CD14-positive monocyte (primary cell): ENCODE measurements at regions of chr18 and their contacts with region 1.

Region 1: GRCh38 chr18:77067291-77068061 is 65.1 kb downstream of the MBP start:
- DNase-seq: peak; percentile 89 to 93 (median 92)
- H3K4me3 ChIP-seq: no peak overlapping the region
- H3K4me3 Mint-ChIP-seq: peak overlapping the region; percentile 59 to 62
- H3K27ac ChIP-seq: peak overlapping the region; percentile 98 to 100
- H3K27ac Mint-ChIP-seq: peak overlapping the region; percentile 100
- H3K4me1 ChIP-seq: peaks cover 72% of the 10 kb centered on the region in 2 donors
- H3K4me1 Mint-ChIP-seq: peaks cover 89% of the 10 kb centered on the region
- H3K27me3 ChIP-seq: no peaks in the 10 kb centered on the region
- H3K27me3 Mint-ChIP-seq: no peaks in the 10 kb centered on the region
- CTCF ChIP-seq: no peak

Region 2: DNA sequence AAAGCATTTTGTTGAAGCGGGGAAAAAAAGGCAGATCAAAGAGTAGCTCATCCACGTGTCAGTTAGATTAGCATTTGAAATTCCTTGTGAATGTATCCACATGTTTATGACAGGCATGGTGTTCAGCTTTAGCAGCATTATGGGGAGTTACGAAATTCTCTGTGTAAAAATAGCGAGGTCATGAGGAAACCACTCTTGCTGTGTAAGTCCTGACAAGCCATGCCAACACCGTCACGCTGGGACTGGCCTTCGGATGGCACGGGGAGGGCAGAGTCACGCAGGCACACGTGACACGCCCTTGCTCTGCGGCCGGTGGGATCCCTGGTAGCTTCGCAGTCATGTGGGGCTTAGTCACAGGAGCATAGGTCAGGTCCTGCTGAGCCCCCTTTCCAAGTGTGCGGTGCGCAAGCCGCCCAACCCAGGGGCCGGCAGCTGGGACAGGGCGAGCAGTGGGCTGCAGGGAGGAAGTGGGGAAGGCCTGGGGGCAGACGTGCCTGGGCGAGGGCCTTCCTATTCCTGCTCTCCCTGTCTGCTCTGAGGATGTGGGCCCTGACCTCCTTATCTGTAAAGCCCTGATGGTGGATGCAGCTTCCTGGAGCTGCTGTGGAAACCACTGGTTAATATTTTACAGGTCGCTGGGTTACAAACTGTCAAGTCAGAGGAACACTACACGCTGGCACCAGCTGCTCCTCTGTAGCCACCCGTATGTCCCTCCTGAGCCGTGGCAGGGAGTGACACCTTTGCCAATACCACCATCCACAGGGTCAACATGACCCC is 47.1 kb after region 1 on chr18:
- intact Hi-C with region 1: loop called (anchors 1 to 5 kb)
- DNase-seq: peak; percentile 100
- H3K4me3 ChIP-seq: peak overlapping the region in 1 of 3 experiments; percentile 29
- H3K4me3 Mint-ChIP-seq: peak overlapping the region; percentile 72 to 76
- H3K27ac ChIP-seq: peak overlapping the region; percentile 97 to 99
- H3K27ac Mint-ChIP-seq: peak overlapping the region; percentile 96 to 99 (median 98)
- H3K4me1 ChIP-seq: peaks cover 76 to 78% of the 10 kb centered on the region in 2 donors
- H3K4me1 Mint-ChIP-seq: peaks cover 82% of the 10 kb centered on the region
- H3K27me3 ChIP-seq: no peaks in the 10 kb centered on the region
- H3K27me3 Mint-ChIP-seq: no peaks in the 10 kb centered on the region
- CTCF ChIP-seq: no peak

Region 3: DNA sequence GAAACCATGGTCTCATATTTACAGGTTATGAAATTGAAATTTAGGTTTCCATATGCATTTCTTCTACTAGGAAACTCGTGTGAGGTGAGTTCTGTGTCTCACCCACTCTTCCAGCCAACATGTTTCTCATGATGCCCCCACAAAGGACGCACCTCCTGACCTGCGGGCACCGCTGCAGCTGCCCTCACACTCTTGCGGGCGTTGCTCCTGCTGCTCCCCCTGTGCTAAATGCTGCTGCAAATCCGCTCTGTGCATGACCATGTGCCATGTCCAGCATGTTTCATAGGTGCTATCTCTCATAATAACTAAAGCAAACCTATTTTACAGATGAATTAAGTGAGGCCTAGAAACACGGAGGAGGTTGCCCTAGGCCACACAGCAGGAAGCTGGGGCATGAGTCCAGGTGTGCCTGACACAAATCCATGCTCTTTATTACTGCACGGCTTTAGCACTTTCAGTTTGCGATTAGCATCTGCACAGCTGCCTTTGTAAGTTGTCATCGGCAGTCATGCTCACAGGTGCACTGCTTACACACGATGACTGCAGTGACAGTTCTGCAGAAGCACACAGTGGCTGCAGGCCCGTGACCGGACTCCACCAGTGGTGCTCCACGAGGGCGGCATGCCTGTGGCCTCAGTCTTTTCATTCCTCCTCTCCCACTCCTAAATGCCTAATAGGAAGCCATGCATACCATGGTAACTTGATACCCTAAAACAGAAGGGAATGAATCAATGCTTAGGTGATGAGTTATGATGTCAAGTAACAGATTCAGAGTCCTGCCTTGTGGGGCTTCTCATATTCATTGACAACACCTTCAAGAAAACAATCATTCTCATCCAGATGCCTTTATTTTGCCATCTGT is 167.3 kb after region 1 on chr18:
- intact Hi-C with region 1: no loop called
- DNase-seq: no peak
- H3K4me3 ChIP-seq: no peak overlapping the region
- H3K4me3 Mint-ChIP-seq: no peak overlapping the region
- H3K27ac ChIP-seq: no peak overlapping the region
- H3K27ac Mint-ChIP-seq: no peak overlapping the region
- H3K4me1 ChIP-seq: no peaks in the 10 kb centered on the region
- H3K4me1 Mint-ChIP-seq: no peaks in the 10 kb centered on the region
- H3K27me3 ChIP-seq: no peaks in the 10 kb centered on the region
- H3K27me3 Mint-ChIP-seq: peaks cover 5 to 11% (median 7%) of the 10 kb centered on the region in 3 donors
- CTCF ChIP-seq: no peak